A673 (cell line): ENCODE measurements at regions of chr15 and their contacts with region 1.

Region 1: GRCh38 chr15:38038659-38039442 is 104.4 kb downstream of the TMCO5A start:
- DNase-seq: no peak
- H3K4me3 ChIP-seq: no peak overlapping the region
- H3K27ac ChIP-seq: no peak overlapping the region
- H3K4me1 ChIP-seq: no peaks in the 10 kb centered on the region
- H3K27me3 ChIP-seq: no peaks in the 10 kb centered on the region
- CTCF ChIP-seq: no peak

Region 2: GRCh38 chr15:37880009-37880834 is 158.6 kb before region 1 on chr15:
- CTCF ChIA-PET with region 1: no interaction called
- POLR2A ChIA-PET with region 1: no interaction called
- intact Hi-C with region 1: no loop called
- DNase-seq: peak; percentile 74
- H3K4me3 ChIP-seq: no peak overlapping the region
- H3K27ac ChIP-seq: peak overlapping the region; percentile 33
- H3K4me1 ChIP-seq: peaks cover 31% of the 10 kb centered on the region
- H3K27me3 ChIP-seq: no peaks in the 10 kb centered on the region
- CTCF ChIP-seq: peak; percentile 89

Region 3: GRCh38 chr15:38129531-38130204 is 90.8 kb after region 1 on chr15:
- CTCF ChIA-PET with region 1: interaction called, 12 read pairs
- POLR2A ChIA-PET with region 1: no interaction called
- intact Hi-C with region 1: no loop called
- DNase-seq: peak; percentile 84
- H3K4me3 ChIP-seq: peak overlapping the region; percentile 29
- H3K27ac ChIP-seq: peak overlapping the region; percentile 79
- H3K4me1 ChIP-seq: peaks cover 40% of the 10 kb centered on the region
- H3K27me3 ChIP-seq: no peaks in the 10 kb centered on the region
- CTCF ChIP-seq: no peak

Region 4: DNA sequence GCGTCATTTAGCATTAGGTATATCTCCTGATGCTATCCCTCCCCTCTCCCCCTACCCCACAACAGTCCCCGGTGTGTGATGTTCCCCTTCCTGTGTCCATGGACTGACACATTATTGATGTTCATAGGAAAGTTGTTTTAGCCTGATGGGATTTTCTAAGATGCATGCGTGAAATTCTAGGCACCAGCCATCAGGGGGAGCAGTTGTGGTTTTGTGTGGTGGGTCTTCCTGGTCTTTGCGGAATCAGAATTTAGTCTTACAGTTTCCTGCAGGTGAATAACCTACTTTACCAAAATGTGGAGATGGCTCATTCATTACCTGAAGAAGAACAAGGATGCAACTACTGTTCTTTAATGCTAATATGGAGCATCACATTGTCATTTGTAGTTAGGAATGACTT is 1087.1 kb after region 1 on chr15:
- CTCF ChIA-PET with region 1: no interaction called
- POLR2A ChIA-PET with region 1: no interaction called
- intact Hi-C with region 1: no loop called
- DNase-seq: peak; percentile 63
- H3K4me3 ChIP-seq: no peak overlapping the region
- H3K27ac ChIP-seq: no peak overlapping the region
- H3K4me1 ChIP-seq: no peaks in the 10 kb centered on the region
- H3K27me3 ChIP-seq: peaks cover 43% of the 10 kb centered on the region
- CTCF ChIP-seq: peak; percentile 75